ENCODE measurements at regions of chr3 and their contacts with region 1.

Region 1: DNA sequence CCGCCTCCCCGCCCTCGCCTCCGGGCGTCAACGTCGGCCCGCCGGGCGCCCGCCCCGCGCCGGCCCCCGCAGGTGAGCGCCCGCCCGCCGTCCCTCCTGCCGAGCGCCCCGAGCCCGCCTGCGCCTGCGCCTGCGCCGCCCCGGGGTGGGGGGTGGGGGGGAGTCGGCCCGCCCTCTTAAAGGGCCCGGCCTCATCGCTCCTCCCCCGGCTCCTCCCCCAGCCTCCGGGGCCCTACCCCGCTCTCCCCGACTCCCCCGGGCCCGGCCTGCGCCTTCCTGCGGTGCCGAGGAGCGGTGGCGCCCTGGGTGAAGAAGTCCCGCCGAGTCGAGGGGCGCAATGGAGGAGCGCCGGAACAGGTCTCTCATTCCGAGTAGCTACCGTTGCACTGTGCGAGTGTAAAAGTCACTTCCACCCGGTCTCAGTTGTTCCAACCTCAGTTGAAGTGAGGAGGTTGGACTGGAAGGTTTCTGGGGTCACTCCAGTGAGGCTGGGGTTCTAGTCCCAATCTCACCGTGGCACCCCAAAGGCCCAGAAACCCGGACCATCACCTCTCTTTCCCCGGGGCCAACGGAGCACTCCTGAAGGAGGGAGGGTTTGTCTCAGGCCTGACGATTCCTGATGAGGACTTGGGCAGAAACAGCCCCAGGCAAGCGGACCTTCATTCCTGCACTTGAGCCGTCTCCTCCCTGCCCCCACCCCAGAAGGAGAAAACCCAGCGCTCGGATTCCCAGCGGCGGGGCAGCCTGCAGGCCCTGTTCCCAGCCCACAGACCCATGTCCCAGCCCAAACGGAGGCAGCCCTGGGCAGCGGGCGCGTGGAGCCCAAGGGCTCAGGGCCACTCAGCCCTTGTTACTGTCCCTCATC is 1.5 kb upstream of the TNK2 start:
- DNase-seq: peak; percentile 94
- H3K4me3 ChIP-seq: peak overlapping the region; percentile 22 to 92 (median 85)
- H3K27ac ChIP-seq: peak overlapping the region; percentile 78 to 81 (median 81)
- H3K4me1 ChIP-seq: peaks cover 0 to 44% (median 41%) of the 10 kb centered on the region in 4 donors
- H3K27me3 ChIP-seq: no peaks in the 10 kb centered on the region
- CTCF ChIP-seq: no peak
- EP300 ChIP-seq: no peak
- POLR2A ChIP-seq: peak in 1 of 2 donors; percentile 36

Region 2: GRCh38 chr3:195760345-195761122 is 149.3 kb before region 1 on chr3:
- intact Hi-C with region 1: no loop called
- DNase-seq: peak; percentile 87
- H3K4me3 ChIP-seq: no peak overlapping the region
- H3K27ac ChIP-seq: peak overlapping the region in 1 of 4 donors; percentile 63
- H3K4me1 ChIP-seq: peaks cover 0 to 21% (median 16%) of the 10 kb centered on the region in 4 donors
- H3K27me3 ChIP-seq: peaks cover 8 to 39% (median 15%) of the 10 kb centered on the region in 3 donors
- CTCF ChIP-seq: no peak
- EP300 ChIP-seq: no peak
- POLR2A ChIP-seq: no peak

Region 3: GRCh38 chr3:195863121-195864006 is 46.5 kb before region 1 on chr3:
- intact Hi-C with region 1: loop called (anchors 1 kb)
- DNase-seq: peak; percentile 96
- H3K4me3 ChIP-seq: no peak overlapping the region
- H3K27ac ChIP-seq: peak overlapping the region; percentile 55 to 71 (median 71)
- H3K4me1 ChIP-seq: peaks cover 0 to 23% (median 17%) of the 10 kb centered on the region in 4 donors
- H3K27me3 ChIP-seq: no peaks in the 10 kb centered on the region
- CTCF ChIP-seq: peak; percentile 88 to 97 (median 96)
- EP300 ChIP-seq: no peak
- POLR2A ChIP-seq: no peak

Region 4: DNA sequence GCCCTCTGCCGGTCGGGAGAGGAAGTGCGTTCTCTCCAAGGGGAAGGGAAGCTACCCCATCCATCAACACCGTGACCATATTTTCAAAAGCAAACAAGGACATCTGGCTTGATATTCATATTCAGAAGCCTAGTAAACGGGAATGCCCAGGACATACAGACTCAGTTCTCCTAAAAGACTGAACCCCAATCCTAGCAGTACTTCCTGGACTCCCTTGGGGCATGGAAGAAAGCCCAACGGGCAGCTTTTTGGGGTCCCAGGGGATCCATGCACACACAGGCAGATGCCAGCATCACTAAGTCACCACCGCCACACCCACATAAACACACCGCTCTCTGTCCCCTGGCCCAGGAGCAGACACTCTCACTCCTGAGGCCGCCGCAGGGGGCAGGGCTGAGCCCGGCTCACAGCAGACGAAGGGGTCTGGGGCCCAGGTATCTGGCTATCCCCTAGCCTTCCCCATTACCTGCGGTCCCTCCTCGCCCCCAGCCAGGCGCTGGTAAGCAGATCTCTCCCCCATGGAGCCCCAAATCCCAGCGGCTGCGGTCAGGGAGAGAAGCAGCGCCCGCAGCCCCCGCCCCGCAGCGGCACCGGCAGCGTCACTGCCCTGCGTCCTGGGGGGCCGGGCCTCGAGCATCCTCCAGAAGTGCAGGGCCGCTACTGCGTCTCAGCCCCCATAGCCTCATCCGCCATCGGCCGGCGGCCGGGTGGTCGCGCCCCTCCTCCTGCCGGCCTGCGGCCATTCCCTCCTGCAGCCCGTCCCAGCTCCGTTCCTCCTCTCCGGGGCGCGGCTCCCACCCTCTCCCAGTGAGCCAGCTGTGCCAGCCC is 14.9 kb before region 1 on chr3:
- intact Hi-C with region 1: loop called (anchors 2 kb)
- DNase-seq: peak; percentile 73
- H3K4me3 ChIP-seq: peak overlapping the region; percentile 57 to 82 (median 70)
- H3K27ac ChIP-seq: peak overlapping the region; percentile 90 to 95 (median 93)
- H3K4me1 ChIP-seq: peaks cover 0 to 69% (median 63%) of the 10 kb centered on the region in 4 donors
- H3K27me3 ChIP-seq: no peaks in the 10 kb centered on the region
- CTCF ChIP-seq: peak; percentile 94 to 97 (median 96)
- EP300 ChIP-seq: no peak
- POLR2A ChIP-seq: no peak

Region 5: DNA sequence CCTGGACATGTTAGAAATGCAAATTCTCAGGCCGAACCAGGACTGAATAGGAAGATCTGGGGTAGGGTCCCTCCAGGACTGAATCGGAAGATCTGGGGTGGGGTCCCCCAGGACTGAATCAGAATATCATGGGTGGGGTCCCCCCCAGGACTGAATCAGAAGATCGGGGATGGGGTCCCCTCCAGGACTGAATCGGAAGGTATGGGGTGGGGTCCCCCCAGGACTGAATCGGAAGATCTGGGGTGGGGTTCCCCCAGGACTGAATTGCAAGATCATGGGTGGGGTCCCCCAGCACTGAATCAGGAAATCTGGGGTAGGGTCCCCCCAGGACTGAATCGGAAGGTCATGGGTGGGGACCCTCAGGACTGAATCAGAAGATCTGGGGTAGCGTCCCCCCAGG is 46.7 kb after region 1 on chr3:
- intact Hi-C with region 1: loop called (anchors 5 kb)
- DNase-seq: peak; percentile 52
- H3K4me3 ChIP-seq: no peak overlapping the region
- H3K27ac ChIP-seq: no peak overlapping the region
- H3K4me1 ChIP-seq: peaks cover 0 to 30% (median 13%) of the 10 kb centered on the region in 4 donors
- H3K27me3 ChIP-seq: no peaks in the 10 kb centered on the region
- CTCF ChIP-seq: no peak
- EP300 ChIP-seq: no peak
- POLR2A ChIP-seq: no peak

Measured in sigmoid colon (tissue), 7 donors.